ENCODE measurements at regions of chr9 and their contacts with region 1.

Region 1: GRCh38 chr9:27365707-27366376 is 68.9 kb upstream of the EQTN start:
- DNase-seq: peak; percentile 88
- H3K4me3 Mint-ChIP-seq: peak overlapping the region; percentile 52
- H3K27ac Mint-ChIP-seq: peak overlapping the region; percentile 65
- H3K4me1 Mint-ChIP-seq: peaks cover 37% of the 10 kb centered on the region
- H3K27me3 Mint-ChIP-seq: peaks cover 5% of the 10 kb centered on the region

Region 2: DNA sequence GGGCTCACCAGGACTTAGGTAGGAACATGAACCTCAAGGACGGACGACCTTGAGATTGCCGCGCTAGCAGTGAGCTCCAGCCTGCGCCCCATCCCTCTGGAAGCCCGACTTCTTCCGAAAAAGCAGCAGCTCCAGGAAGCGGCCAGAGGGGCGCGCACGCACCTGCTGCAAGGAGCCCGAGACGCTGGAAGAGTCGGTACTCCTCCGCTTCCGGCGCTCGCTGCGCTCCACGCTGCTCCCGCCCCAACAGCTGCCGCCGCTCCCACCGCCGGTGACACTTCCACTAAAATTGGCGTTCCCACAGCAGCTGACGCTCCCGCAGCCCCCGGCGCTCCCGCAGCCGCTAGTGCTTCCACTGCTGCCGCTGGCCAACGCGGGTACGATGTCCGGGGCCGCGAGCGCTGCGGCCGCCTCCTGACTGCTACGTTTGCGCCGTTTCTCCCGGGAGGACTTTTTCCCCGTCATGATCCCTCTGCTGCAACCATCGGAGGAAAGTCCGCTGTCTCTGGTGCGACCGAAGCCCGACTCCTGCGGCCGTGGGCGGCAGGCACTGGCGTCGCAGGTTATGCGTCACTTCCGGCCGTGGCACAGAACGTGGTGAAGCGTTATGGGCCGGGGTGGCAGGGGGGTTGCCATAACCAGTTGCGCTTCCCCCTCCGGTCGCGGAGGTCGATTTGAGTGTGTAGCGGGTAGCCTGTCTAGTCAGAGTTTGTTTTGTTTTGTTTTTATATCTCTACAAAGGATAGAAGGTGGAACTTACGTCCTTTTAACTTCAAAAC is 473.4 kb before region 1 on chr9 and contains the start of gene CAAP1:
- intact Hi-C with region 1: loop called (anchors 5 kb)
- DNase-seq: peak; percentile 97
- H3K4me3 Mint-ChIP-seq: peak within 1 kb of the TSS; percentile 91
- H3K27ac Mint-ChIP-seq: peak within 1 kb of the TSS; percentile 97
- H3K4me1 Mint-ChIP-seq: peaks cover 27% of the 10 kb centered on the region
- H3K27me3 Mint-ChIP-seq: no peaks in the 10 kb centered on the region
- total RNA-seq, gene CAAP1: 19.9 and 23.1 TPM in 2 replicates

Region 3: DNA sequence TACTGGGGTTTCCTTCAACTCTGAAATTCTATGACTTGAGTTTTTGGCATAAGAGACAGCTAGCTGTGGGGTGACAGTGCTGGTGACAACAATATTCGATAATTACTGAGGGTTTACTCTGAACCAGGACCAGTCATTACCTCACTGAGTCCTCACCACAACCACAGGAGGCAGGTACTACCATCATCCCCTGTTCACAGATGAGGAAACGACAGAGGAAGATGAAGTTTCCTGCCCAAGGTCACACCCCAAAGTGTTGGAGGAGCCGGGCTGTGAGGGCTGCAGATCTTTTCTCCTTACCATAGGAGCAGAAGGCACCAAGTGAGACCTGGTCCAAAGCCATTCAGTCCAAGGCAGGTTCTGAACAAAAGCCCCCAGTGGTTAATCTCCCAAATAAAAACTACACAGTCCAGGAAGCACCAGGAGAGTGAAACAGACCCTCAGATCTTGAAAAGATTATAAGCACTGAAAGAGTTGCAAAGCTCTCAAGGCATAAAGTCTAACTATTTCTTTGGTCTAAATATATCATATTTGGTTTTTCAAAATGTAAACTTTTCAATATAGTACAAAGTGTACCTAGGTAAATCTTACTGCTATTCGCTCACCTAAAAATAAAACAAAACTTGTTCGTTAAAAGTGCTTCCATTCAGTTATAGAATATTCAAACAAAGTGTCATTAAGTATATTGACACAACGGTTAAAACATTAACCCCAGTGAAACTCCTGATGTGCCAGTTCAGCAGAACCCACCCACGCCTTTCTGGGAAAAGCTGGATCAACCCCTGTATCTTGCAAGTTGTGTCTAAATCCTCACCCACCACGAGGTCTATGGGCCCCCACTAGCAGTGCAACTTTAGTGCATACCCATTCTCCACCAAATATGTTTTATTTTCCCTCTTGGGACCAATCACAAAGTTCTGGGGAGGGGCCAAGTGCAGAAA is 13.7 kb after region 1 on chr9:
- intact Hi-C with region 1: loop called (anchors 1 kb)
- DNase-seq: peak; percentile 86
- H3K4me3 Mint-ChIP-seq: peak overlapping the region; percentile 54
- H3K27ac Mint-ChIP-seq: peak overlapping the region; percentile 52
- H3K4me1 Mint-ChIP-seq: peaks cover 28% of the 10 kb centered on the region
- H3K27me3 Mint-ChIP-seq: peaks cover 9% of the 10 kb centered on the region

Region 4: DNA sequence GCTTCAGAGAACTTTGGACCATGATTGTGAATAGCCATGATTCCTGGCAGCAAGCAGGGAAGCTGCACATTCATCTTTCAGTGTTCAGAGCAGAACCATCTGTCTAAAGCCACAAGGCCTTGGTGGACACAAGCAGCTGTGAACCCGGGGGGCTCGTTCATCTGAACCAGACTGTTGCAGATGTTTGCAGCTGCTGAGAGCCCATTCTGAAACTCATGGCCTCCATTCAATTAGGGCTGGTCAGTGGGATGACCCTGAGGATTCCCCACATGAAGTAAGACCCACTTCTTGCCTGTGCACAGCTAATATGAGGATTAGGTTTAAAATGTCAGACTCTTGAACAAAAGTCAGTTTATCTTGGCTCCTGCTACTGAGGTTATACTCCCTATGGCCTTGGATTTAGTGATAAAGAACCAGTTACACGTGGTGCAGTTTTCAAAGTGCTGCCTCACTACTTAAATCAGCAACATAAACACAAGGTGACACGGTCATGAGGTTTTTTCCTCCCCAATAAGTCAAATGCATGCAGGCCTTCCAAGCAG is 48.4 kb after region 1 on chr9:
- intact Hi-C with region 1: no loop called
- DNase-seq: no peak
- H3K4me3 Mint-ChIP-seq: no peak overlapping the region
- H3K27ac Mint-ChIP-seq: no peak overlapping the region
- H3K4me1 Mint-ChIP-seq: no peaks in the 10 kb centered on the region
- H3K27me3 Mint-ChIP-seq: peaks cover 2% of the 10 kb centered on the region

Region 5: GRCh38 chr9:27499481-27499880 is 133.6 kb after region 1 on chr9:
- intact Hi-C with region 1: loop called (anchors 1 kb)
- DNase-seq: no peak
- H3K4me3 Mint-ChIP-seq: peak overlapping the region; percentile 22
- H3K27ac Mint-ChIP-seq: peak overlapping the region; percentile 13
- H3K4me1 Mint-ChIP-seq: peaks cover 18% of the 10 kb centered on the region
- H3K27me3 Mint-ChIP-seq: no peaks in the 10 kb centered on the region

Region 6: DNA sequence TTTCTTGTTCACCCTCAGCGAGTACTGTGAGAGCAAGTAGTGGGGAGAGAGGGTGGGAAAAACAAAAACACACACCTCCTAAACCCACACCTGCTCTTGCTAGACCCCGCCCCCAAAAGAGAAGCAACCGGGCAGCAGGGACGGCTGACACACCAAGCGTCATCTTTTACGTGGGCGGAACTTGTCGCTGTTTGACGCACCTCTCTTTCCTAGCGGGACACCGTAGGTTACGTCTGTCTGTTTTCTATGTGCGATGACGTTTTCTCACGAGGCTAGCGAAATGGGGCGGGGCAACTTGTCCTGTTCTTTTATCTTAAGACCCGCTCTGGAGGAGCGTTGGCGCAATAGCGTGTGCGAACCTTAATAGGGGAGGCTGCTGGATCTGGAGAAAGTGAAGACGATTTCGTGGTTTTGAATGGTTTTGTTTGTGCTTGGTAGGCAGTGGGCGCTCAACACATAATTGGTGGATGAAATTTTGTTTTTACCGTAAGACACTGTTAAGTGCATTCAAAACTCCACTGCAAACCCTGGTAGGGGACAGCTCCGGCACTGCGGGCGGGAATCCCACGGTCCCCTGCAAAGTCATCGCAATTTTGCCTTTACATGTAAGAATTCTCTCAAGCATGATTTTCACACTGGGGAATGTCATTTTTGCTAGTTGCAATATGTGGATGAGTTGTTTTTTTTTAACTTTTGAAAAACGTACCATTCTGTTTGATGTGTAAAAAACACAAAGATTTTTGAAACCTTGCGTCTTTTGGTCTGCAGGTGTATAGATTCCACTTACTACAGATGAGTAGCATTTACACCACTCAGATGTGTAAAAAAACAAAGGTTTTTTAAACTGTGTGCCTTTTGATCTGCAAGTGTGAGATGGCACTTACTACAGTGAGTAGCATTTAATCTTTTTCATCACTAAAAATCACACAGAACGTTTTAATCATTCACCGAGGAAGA is 208.1 kb after region 1 on chr9:
- intact Hi-C with region 1: loop called (anchors 1 kb)
- DNase-seq: peak; percentile 98
- H3K4me3 Mint-ChIP-seq: peak overlapping the region; percentile 88
- H3K27ac Mint-ChIP-seq: peak overlapping the region; percentile 100
- H3K4me1 Mint-ChIP-seq: peaks cover 26% of the 10 kb centered on the region
- H3K27me3 Mint-ChIP-seq: peaks cover 7% of the 10 kb centered on the region

Region 7: GRCh38 chr9:27847818-27848217 is 482.0 kb after region 1 on chr9:
- intact Hi-C with region 1: no loop called
- DNase-seq: no peak
- H3K4me3 Mint-ChIP-seq: no peak overlapping the region
- H3K27ac Mint-ChIP-seq: no peak overlapping the region
- H3K4me1 Mint-ChIP-seq: no peaks in the 10 kb centered on the region
- H3K27me3 Mint-ChIP-seq: peaks cover 4% of the 10 kb centered on the region